Activated CD4-positive, alpha-beta T cell treated with anti-CD3 and anti-CD28 coated beads for 36 hours (primary cell): ENCODE measurements at regions of chr1 and their contacts with region 1.

Region 1: DNA sequence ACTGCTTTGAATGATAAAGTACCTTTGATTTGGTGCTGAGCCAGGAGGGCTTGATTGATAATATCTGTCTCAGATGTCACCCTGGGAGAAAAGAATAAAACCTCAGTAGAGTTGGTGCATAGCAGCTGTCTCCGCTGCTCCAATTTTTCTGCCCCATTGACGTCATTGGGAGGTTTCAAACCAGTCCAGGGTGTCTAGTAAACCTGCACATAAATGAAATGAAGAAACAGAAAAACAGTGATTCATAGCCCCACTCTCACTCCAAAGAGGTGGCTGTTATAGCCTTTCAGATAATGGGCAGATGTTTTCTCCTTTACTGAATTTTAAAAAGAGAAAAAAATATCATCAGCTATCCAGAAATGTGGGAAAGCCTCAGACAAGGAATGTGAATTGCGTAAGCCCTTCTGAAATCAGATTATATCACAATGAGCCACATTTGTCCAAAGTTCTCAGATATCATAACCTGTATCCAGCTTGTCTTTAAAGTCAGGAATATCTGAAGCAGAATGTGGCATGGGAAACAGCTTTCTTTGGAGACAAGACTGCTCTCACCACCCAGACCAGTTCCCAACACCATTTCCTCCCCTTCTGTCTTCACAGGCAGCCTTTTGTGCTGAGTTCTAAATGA is 351.3 kb upstream of the SGIP1 start:
- DNase-seq: peak; percentile 71
- ATAC-seq: peak; percentile 98
- H3K4me3 Mint-ChIP-seq: no peak overlapping the region
- H3K27ac Mint-ChIP-seq: no peak overlapping the region
- H3K4me1 Mint-ChIP-seq: peaks cover 32% of the 10 kb centered on the region
- H3K27me3 Mint-ChIP-seq: peaks cover 3% of the 10 kb centered on the region

Region 2: DNA sequence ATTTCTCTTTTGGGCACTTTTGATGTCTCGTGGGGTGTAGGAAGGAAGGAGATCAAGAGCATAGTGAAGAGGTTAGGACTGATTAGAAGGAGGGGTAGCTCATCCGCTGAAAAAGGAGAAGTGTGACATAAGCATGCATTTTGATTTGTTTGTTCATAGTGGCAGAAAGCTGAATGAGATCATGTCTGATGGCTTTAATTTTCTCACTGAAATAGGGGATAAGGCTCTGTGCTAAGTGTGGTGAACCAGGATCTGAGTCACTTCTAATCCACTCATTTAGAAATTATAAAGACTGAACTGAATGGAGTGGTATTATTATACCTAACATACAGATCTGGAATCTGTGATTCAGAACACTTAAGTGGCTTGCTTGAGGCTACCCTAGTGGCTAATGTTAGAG is 45.4 kb before region 1 on chr1:
- CTCF ChIA-PET with region 1: interaction called, 3 read pairs
- POLR2A ChIA-PET with region 1: no interaction called
- intact Hi-C with region 1: loop called in 1 of 2 experiments (anchors 2 kb)
- DNase-seq: peak; percentile 5
- ATAC-seq: peak; percentile 96
- H3K4me3 Mint-ChIP-seq: no peak overlapping the region
- H3K27ac Mint-ChIP-seq: no peak overlapping the region
- H3K4me1 Mint-ChIP-seq: peaks cover 6% of the 10 kb centered on the region
- H3K27me3 Mint-ChIP-seq: peaks cover 5% of the 10 kb centered on the region

Region 3: GRCh38 chr1:66154394-66154793 is 28.3 kb before region 1 on chr1:
- CTCF ChIA-PET with region 1: no interaction called
- POLR2A ChIA-PET with region 1: no interaction called
- intact Hi-C with region 1: no loop called
- DNase-seq: no peak
- ATAC-seq: no peak
- H3K4me3 Mint-ChIP-seq: no peak overlapping the region
- H3K27ac Mint-ChIP-seq: no peak overlapping the region
- H3K4me1 Mint-ChIP-seq: no peaks in the 10 kb centered on the region
- H3K27me3 Mint-ChIP-seq: peaks cover 25% of the 10 kb centered on the region

Region 4: DNA sequence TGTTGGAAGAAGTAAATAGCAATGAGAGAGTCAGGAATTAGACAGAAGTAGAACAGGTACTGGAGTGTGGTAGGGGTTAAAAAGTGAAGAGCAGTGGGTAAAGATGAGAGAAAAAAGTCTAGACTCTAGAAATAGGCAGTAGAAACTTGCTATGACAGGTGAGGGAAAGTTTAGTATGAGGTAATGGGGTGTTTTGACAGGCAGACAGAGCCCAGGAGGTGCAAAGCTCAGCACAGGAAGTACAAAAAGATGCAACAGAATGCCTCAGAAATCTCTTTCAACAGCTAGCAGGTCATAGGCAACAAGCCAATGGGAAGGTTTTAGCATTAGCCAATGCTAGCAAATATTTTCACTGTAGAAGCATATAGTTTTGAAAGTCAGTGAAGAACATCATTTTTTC is 32.2 kb after region 1 on chr1:
- CTCF ChIA-PET with region 1: no interaction called
- POLR2A ChIA-PET with region 1: no interaction called
- intact Hi-C with region 1: loop called in 1 of 2 experiments (anchors 5 kb)
- DNase-seq: peak; percentile 37
- ATAC-seq: peak; percentile 93
- H3K4me3 Mint-ChIP-seq: no peak overlapping the region
- H3K27ac Mint-ChIP-seq: peak overlapping the region; percentile 52
- H3K4me1 Mint-ChIP-seq: peaks cover 14% of the 10 kb centered on the region
- H3K27me3 Mint-ChIP-seq: no peaks in the 10 kb centered on the region

Region 5: GRCh38 chr1:66231217-66231616 is 48.6 kb after region 1 on chr1:
- CTCF ChIA-PET with region 1: interaction called, 3 read pairs
- POLR2A ChIA-PET with region 1: interaction called, 6 read pairs
- intact Hi-C with region 1: loop called in 1 of 2 experiments (anchors 2 kb)
- DNase-seq: no peak
- ATAC-seq: peak; percentile 97
- H3K4me3 Mint-ChIP-seq: no peak overlapping the region
- H3K27ac Mint-ChIP-seq: no peak overlapping the region
- H3K4me1 Mint-ChIP-seq: peaks cover 15% of the 10 kb centered on the region
- H3K27me3 Mint-ChIP-seq: peaks cover 6% of the 10 kb centered on the region